PC-9 (cell line): ENCODE measurements at regions of chr3 and their contacts with region 1.

Region 1: DNA sequence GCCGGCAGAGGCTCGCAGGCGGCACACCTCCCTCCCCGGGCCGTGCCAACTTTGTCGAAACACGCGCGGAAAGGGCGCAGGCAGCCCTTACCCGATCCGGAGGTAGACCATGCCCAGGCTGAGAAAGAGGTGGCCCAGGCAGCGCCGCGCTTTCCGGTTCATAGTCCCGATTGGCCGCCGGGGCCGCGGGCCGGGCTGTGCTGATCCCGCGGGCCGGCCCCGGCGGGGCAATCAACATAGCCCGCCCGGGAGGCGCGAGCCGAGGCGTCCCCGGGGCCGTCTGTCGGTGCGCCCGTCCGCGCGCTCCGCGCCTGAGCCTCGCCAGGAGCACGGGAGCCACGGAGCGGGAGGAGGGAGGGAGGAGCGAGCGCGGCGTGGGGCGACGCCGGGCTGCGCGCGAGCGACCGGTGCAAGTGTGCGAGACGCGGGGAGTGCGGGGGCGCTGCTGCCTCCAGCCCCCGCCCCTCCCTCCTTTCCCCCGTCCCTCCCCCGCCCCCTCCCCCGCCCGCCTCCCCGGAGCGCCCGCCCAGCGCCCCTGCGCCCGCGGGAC is at the start of gene WNT7A:
- DNase-seq: peak in 1 of 2 experiments; percentile 45
- H3K4me3 ChIP-seq: peak within 1 kb of the TSS; percentile 85
- H3K27ac ChIP-seq: no peak within 1 kb of the TSS
- H3K4me1 ChIP-seq: peaks cover 30% of the 10 kb centered on the region
- H3K27me3 ChIP-seq: no peaks in the 10 kb centered on the region
- CTCF ChIP-seq: no peak
- total RNA-seq, gene WNT7A: 4.7 and 6.3 TPM in 2 replicates

Region 2: GRCh38 chr3:13825311-13826220 is 54.2 kb before region 1 on chr3:
- CTCF ChIA-PET with region 1: no interaction called
- POLR2A ChIA-PET with region 1: no interaction called
- intact Hi-C with region 1: loop called (anchors 2 kb)
- DNase-seq: peak in 1 of 2 experiments; percentile 48
- H3K4me3 ChIP-seq: no peak overlapping the region
- H3K27ac ChIP-seq: peak overlapping the region; percentile 32
- H3K4me1 ChIP-seq: peaks cover 69% of the 10 kb centered on the region
- H3K27me3 ChIP-seq: no peaks in the 10 kb centered on the region
- CTCF ChIP-seq: no peak

Region 3: DNA sequence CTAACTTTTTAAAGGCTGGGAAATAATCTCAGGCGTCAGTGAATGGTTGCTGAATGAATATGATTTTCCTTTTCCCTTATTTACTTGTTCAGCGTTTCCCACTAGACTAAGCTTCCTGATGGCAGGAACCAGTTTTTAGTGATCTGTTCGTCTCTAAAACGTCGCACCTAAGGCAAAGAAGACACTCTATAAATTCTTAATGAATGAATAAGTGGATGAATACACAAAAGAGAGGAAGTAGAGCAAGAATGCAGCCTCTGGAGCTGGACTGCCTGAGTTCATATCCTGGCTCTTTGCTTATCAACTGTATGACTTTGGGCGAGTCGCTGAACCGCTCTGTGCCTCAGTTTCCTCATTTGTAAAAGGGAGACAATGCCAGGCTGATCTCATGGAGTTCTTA is 38.6 kb before region 1 on chr3:
- CTCF ChIA-PET with region 1: no interaction called
- POLR2A ChIA-PET with region 1: no interaction called
- intact Hi-C with region 1: loop called (anchors 1 kb)
- DNase-seq: peak in 1 of 2 experiments; percentile 84
- H3K4me3 ChIP-seq: no peak overlapping the region
- H3K27ac ChIP-seq: peak overlapping the region; percentile 80
- H3K4me1 ChIP-seq: peaks cover 45% of the 10 kb centered on the region
- H3K27me3 ChIP-seq: no peaks in the 10 kb centered on the region
- CTCF ChIP-seq: no peak

Region 4: GRCh38 chr3:13850158-13850945 is 29.4 kb before region 1 on chr3:
- CTCF ChIA-PET with region 1: interaction called, 3 read pairs
- POLR2A ChIA-PET with region 1: no interaction called
- intact Hi-C with region 1: loop called (anchors 1 kb)
- DNase-seq: peak; percentile 98 to 99
- H3K4me3 ChIP-seq: peak overlapping the region; percentile 9; the same call in 1 of the 2 replicates
- H3K27ac ChIP-seq: peak overlapping the region; percentile 91
- H3K4me1 ChIP-seq: peaks cover 69% of the 10 kb centered on the region
- H3K27me3 ChIP-seq: no peaks in the 10 kb centered on the region
- CTCF ChIP-seq: no peak